ENCODE measurements at regions of chr11 and their contacts with region 1.

Region 1: GRCh38 chr11:114180301-114181055 is 115.7 kb upstream of the NNMT start:
- H3K4me3 ChIP-seq: no peak overlapping the region
- H3K27ac ChIP-seq: no peak overlapping the region
- H3K4me1 ChIP-seq: no peaks in the 10 kb centered on the region; the same call in 1 of the 2 replicates
- CTCF ChIP-seq: peak; percentile 72

Region 2: DNA sequence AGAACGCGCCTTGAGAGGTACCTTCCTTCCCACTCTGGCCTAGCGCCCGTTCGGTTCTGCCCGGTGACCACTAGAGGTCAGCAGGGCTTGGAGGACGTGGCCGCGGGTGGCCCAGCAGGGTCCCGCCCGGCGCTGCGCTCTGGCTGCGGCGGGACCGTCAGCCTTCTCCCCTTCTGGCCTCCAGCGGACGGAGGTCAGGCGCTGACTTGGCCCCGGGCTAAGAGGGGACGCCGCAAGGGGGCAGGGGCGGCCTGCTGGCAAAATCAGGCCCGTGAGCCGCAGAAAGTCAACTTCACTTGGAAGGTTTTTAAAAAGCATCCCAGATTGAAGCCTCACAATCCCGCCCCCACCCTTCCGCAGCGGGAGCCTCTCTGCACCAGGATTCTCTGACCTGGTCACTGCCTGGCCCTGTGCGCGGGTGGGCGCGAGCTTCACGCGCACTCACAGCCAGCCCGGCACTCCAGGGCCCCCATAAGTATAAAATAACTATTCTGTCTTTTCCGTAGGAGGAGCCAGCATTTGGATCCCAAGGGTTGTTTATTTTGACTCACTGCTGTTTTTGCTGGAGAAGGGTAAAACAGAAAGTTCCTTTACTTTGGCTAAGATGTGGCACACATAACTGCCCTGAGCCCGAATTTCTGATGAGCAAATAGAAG is 144.2 kb before region 1 on chr11:
- CTCF ChIA-PET with region 1: interaction called, 14 read pairs
- POLR2A ChIA-PET with region 1: no interaction called
- H3K4me3 ChIP-seq: peak overlapping the region; percentile 32
- H3K27ac ChIP-seq: no peak overlapping the region; the same call in 1 of the 2 replicates
- H3K4me1 ChIP-seq: 0 out of 2 replicates have a peak, but pooled peaks cover 5% of the 10 kb centered on the region
- CTCF ChIP-seq: peak; percentile 95

Region 3: DNA sequence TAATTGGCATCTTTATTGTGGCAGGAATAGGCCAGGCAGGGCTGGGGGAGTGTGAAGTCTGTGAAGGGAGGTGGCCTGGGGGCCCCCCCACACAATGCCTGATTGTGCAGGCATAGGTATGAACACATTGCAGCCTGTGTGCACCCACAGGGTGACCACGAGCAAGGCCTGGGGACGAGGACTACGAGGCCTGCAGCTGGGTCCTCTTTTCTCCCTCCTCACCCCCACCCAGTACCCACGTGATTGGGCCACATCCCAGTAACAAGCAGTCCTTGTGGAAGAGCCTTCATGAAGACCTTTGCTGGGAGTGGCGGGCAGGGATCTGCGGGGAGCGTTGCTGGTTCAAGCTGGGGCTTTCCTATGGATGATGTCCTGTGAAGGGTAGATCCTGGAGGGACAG is 91.6 kb before region 1 on chr11:
- CTCF ChIA-PET with region 1: no interaction called
- POLR2A ChIA-PET with region 1: no interaction called
- H3K4me3 ChIP-seq: no peak overlapping the region
- H3K27ac ChIP-seq: no peak overlapping the region
- H3K4me1 ChIP-seq: no peaks in the 10 kb centered on the region
- CTCF ChIP-seq: no peak

Region 4: GRCh38 chr11:114166897-114167323 is 13.6 kb before region 1 on chr11:
- CTCF ChIA-PET with region 1: interaction called, 12 read pairs
- POLR2A ChIA-PET with region 1: interaction called, 4 read pairs
- H3K4me3 ChIP-seq: no peak overlapping the region
- H3K27ac ChIP-seq: peak overlapping the region; percentile 13
- H3K4me1 ChIP-seq: peaks cover 20% of the 10 kb centered on the region
- CTCF ChIP-seq: no peak

Region 5: GRCh38 chr11:114192841-114193389 is 12.4 kb after region 1 on chr11:
- CTCF ChIA-PET with region 1: interaction called, 51 read pairs
- POLR2A ChIA-PET with region 1: interaction called, 4 read pairs
- H3K4me3 ChIP-seq: no peak overlapping the region
- H3K27ac ChIP-seq: no peak overlapping the region
- H3K4me1 ChIP-seq: peaks cover 3% of the 10 kb centered on the region
- CTCF ChIP-seq: no peak

Measured in HEK293 (cell line).